Activated T-helper 2 cell treated with anti-CD3 and anti-CD28 coated beads, Interferon-gamma antibody, Interleukin-2, Interleukin-4, amounts not matched to agents 10 μg/mL and 5 μg/mL and 100 μg/mL, durations not matched to agents 14 hours and 24 hours and 36 hours (primary cell): ENCODE measurements at regions of chr12 and their contacts with region 1.

Region 1: GRCh38 chr12:93569656-93570551 is 2.6 kb upstream of the SOCS2 start:
- DNase-seq: peak; percentile 71
- H3K4me3 Mint-ChIP-seq: peak overlapping the region; percentile 83
- H3K27ac Mint-ChIP-seq: peak overlapping the region; percentile 83
- H3K4me1 Mint-ChIP-seq: peaks cover 17% of the 10 kb centered on the region
- H3K27me3 Mint-ChIP-seq: peaks cover 20% of the 10 kb centered on the region

Region 2: GRCh38 chr12:93467351-93468007 is 102.4 kb before region 1 on chr12 and contains the start of gene MRPL42:
- intact Hi-C with region 1: loop called (anchors 1 kb)
- DNase-seq: peak; percentile 91
- H3K4me3 Mint-ChIP-seq: peak within 1 kb of the TSS; percentile 86
- H3K27ac Mint-ChIP-seq: peak within 1 kb of the TSS; percentile 86
- H3K4me1 Mint-ChIP-seq: peaks cover 29% of the 10 kb centered on the region
- H3K27me3 Mint-ChIP-seq: no peaks in the 10 kb centered on the region
- total RNA-seq, gene MRPL42: 80.5 and 89.3 TPM in 2 replicates

Region 3: GRCh38 chr12:93514853-93515252 is 55.1 kb before region 1 on chr12:
- intact Hi-C with region 1: no loop called
- DNase-seq: no peak
- H3K4me3 Mint-ChIP-seq: no peak overlapping the region
- H3K27ac Mint-ChIP-seq: no peak overlapping the region
- H3K4me1 Mint-ChIP-seq: no peaks in the 10 kb centered on the region
- H3K27me3 Mint-ChIP-seq: peaks cover 4% of the 10 kb centered on the region

Region 4: DNA sequence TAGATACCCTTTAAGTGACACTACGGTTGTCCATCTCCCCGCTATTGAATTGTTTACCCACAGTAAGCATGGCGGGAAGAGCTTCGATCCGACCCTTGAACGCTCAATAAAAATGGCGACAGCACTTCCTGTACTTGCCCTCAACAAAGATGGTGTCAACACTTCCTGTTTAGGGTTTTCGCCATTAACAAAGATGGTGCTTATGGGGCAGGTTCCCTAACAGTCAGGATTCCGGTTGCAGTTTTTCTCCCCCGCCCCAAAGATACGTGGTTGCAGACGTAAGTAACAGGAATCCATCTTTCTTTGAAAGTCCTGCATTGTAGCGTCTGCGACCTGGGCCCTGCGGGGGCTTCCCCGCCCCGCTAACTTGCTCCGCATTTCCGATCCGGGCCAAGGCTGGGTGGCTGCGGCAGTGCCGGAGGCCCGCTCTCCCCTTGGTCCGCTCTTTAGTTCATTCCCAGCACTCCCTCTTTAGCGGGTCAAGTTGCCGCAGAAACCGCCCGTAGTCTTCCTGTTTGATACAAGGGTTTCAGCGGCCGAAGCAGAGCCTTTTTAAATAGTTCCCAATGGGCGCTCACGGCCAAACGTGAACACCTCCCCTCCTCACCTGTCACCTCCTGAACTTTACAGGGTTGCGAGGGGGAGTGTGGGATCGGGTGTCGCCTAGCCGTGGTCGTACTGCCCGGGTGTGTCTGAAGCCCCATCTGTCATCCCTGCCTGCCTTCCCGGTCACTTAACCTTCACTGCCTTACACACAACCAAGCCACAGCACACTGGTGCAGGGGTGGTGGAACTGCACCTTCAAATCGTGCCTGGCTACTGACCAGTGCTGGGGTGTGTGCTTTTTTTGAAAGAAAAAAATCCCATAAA is 107.5 kb after region 1 on chr12 and contains the start of gene CRADD:
- intact Hi-C with region 1: loop called (anchors 1 kb)
- DNase-seq: peak; percentile 85
- H3K4me3 Mint-ChIP-seq: peak within 1 kb of the TSS; percentile 94
- H3K27ac Mint-ChIP-seq: peak within 1 kb of the TSS; percentile 99
- H3K4me1 Mint-ChIP-seq: peaks cover 30% of the 10 kb centered on the region
- H3K27me3 Mint-ChIP-seq: peaks cover 9% of the 10 kb centered on the region
- total RNA-seq, gene CRADD: 10.2 and 10.7 TPM in 2 replicates

Region 5: GRCh38 chr12:93785262-93786010 is 215.5 kb after region 1 on chr12:
- intact Hi-C with region 1: loop called (anchors 2 kb)
- DNase-seq: peak; percentile 37
- H3K4me3 Mint-ChIP-seq: peak overlapping the region; percentile 50
- H3K27ac Mint-ChIP-seq: peak overlapping the region; percentile 92
- H3K4me1 Mint-ChIP-seq: peaks cover 55% of the 10 kb centered on the region
- H3K27me3 Mint-ChIP-seq: no peaks in the 10 kb centered on the region

Region 6: DNA sequence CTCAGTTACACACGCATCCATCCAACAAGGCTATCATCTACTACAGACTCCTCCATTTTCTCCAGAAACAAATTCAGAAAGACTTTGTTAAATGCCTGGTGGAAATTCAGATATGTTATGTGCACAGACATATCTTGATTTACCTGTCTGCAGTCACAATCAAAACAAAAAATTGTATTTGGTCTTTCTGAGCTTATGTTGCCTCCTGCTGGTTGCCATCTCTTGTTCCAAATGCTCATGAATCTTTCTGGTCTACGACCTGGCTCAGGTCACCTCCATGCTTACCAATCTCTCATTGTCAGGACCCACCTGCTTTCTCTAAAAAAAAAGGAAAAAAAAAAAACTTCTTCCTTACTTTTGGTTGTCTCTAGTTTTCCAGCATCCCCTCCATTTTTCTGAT is 409.3 kb after region 1 on chr12:
- intact Hi-C with region 1: loop called (anchors 1 kb)
- DNase-seq: peak; percentile 13
- H3K4me3 Mint-ChIP-seq: no peak overlapping the region
- H3K27ac Mint-ChIP-seq: no peak overlapping the region
- H3K4me1 Mint-ChIP-seq: peaks cover 34% of the 10 kb centered on the region
- H3K27me3 Mint-ChIP-seq: peaks cover 8% of the 10 kb centered on the region

Region 7: GRCh38 chr12:95548539-95549391 is 1978.9 kb after region 1 on chr12:
- intact Hi-C with region 1: loop called (anchors 5 kb)
- DNase-seq: peak; percentile 62
- H3K4me3 Mint-ChIP-seq: peak overlapping the region; percentile 88
- H3K27ac Mint-ChIP-seq: peak overlapping the region; percentile 63
- H3K4me1 Mint-ChIP-seq: peaks cover 45% of the 10 kb centered on the region
- H3K27me3 Mint-ChIP-seq: peaks cover 15% of the 10 kb centered on the region